SK-N-SH (cell line): ENCODE measurements at regions of chr16 and their contacts with region 1.

Region 1: DNA sequence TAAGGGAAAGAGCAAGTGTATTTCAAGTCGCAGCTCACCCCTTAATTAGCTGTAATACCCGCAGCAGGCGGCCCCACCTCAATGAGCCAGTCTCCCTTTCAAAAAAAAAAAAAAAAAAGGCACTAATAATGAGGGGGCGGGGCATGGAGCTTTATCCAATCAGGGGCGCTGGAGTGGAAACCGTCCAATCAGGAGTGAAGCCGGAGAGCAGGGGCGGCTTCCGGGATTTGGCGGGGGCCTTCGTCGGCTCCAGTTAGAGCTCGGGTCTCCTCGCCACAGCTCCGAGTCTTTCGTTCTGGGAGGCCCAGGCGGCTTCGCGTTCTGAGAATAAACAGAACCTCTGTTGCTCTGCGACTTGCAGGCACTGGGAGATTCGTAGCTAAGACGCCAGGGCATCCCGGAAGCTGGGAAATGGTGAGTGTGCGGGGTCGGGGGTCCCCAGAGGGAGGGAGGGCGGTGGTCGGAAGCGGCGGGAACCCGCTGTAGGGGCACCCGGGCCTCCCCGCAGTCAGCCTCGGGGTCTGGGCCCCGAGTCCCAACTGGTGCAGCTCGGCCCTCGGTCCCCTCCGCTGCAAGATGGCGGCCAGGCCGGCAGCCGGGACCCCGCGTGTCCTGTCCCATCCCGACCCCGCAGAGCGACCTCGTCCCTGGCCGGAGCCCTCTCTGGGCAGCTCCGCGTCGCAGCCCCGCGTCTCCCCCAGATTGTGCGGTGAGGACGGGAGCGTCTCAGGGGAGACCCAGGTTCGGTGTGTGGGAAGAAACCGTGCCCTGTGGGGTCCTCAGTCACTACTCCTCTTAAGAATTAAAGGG is at the start of gene ZNF267:
- DNase-seq: peak; percentile 93
- H3K4me3 ChIP-seq: peak within 1 kb of the TSS; percentile 92 to 96
- H3K27ac ChIP-seq: peak within 1 kb of the TSS; percentile 82 to 89
- H3K4me1 ChIP-seq: peaks cover 16 to 28% of the 10 kb centered on the region in 2 experiments
- H3K27me3 ChIP-seq: no peaks in the 10 kb centered on the region
- CTCF ChIP-seq: no peak
- EP300 ChIP-seq: no peak
- RAD21 ChIP-seq: no peak
- polyA plus RNA-seq, gene ZNF267: 1.7 and 1.9 TPM in 2 replicates

Region 2: DNA sequence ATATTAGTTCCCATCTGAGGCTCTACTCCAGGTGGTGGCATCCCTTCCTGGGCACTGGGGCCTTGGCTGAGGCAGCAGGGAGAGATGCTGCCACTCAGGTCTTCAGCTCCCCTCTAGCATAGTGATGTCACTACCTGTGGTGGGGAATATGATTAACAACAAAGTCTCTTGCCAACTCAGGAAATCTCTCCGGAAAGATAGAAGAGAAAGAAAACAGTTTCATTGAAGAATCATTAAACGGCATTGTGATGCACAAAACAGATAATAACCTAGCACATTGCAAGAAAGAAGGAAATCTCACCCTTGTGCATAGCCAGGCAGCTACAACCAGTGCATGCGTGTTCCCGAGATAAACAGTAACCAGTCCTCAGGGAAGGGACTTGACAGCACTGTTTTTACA is 12.3 kb before region 1 on chr16:
- CTCF ChIA-PET with region 1: interaction called, 144 read pairs
- POLR2A ChIA-PET with region 1: no interaction called
- DNase-seq: no peak
- H3K4me3 ChIP-seq: no peak overlapping the region
- H3K27ac ChIP-seq: no peak overlapping the region
- H3K4me1 ChIP-seq: no peaks in the 10 kb centered on the region; a peak in 1 of 4 replicates
- H3K27me3 ChIP-seq: peaks cover 37% of the 10 kb centered on the region; the same call in 1 of the 2 replicates
- CTCF ChIP-seq: no peak
- EP300 ChIP-seq: no peak
- RAD21 ChIP-seq: no peak

Region 3: GRCh38 chr16:31888735-31889134 is 15.0 kb after region 1 on chr16:
- CTCF ChIA-PET with region 1: no interaction called
- POLR2A ChIA-PET with region 1: no interaction called
- DNase-seq: no peak
- H3K4me3 ChIP-seq: no peak overlapping the region
- H3K27ac ChIP-seq: no peak overlapping the region
- H3K4me1 ChIP-seq: no peaks in the 10 kb centered on the region
- H3K27me3 ChIP-seq: no peaks in the 10 kb centered on the region
- CTCF ChIP-seq: no peak
- EP300 ChIP-seq: no peak
- RAD21 ChIP-seq: no peak